ENCODE measurements at regions of chr14 and their contacts with region 1.

Region 1: GRCh38 chr14:54579621-54580020 is 12.7 kb downstream of the SAMD4A start:
- DNase-seq: peak; percentile 73
- ATAC-seq: peak; percentile 42
- H3K4me3 ChIP-seq: no peak overlapping the region
- H3K27ac ChIP-seq: no peak overlapping the region
- H3K4me1 ChIP-seq: peaks cover 34% of the 10 kb centered on the region
- H3K27me3 ChIP-seq: no peaks in the 10 kb centered on the region
- CTCF ChIP-seq: no peak
- POLR2A ChIP-seq: peak; percentile 31; the same call in 1 of the 2 replicates
- RAD21 ChIP-seq: no peak

Region 2: GRCh38 chr14:54591461-54591860 is 11.8 kb after region 1 on chr14:
- CTCF ChIA-PET with region 1: interaction called, 4 read pairs
- POLR2A ChIA-PET with region 1: interaction called, 4 read pairs
- dilution Hi-C with region 1: no loop called
- in situ Hi-C with region 1: no loop called
- intact Hi-C with region 1: loop called (anchors 2 kb)
- DNase-seq: no peak
- ATAC-seq: no peak
- H3K4me3 ChIP-seq: no peak overlapping the region
- H3K27ac ChIP-seq: no peak overlapping the region
- H3K4me1 ChIP-seq: peaks cover 11% of the 10 kb centered on the region
- H3K27me3 ChIP-seq: no peaks in the 10 kb centered on the region
- CTCF ChIP-seq: no peak
- POLR2A ChIP-seq: no peak
- RAD21 ChIP-seq: no peak

Region 3: GRCh38 chr14:54597795-54598443 is 18.3 kb after region 1 on chr14:
- CTCF ChIA-PET with region 1: no interaction called
- POLR2A ChIA-PET with region 1: no interaction called
- dilution Hi-C with region 1: no loop called
- in situ Hi-C with region 1: no loop called
- intact Hi-C with region 1: loop called (anchors 2 kb)
- DNase-seq: peak; percentile 70
- ATAC-seq: peak; percentile 43
- H3K4me3 ChIP-seq: no peak overlapping the region
- H3K27ac ChIP-seq: peak overlapping the region; percentile 76; the same call in 1 of the 2 replicates
- H3K4me1 ChIP-seq: peaks cover 14% of the 10 kb centered on the region
- H3K27me3 ChIP-seq: no peaks in the 10 kb centered on the region
- CTCF ChIP-seq: no peak
- POLR2A ChIP-seq: no peak
- RAD21 ChIP-seq: no peak

Region 4: GRCh38 chr14:54691525-54692283 is 112.1 kb after region 1 on chr14:
- CTCF ChIA-PET with region 1: interaction called, 3 read pairs
- POLR2A ChIA-PET with region 1: interaction called, 21 read pairs
- dilution Hi-C with region 1: no loop called
- in situ Hi-C with region 1: no loop called
- intact Hi-C with region 1: no loop called
- DNase-seq: peak; percentile 69
- ATAC-seq: peak; percentile 81
- H3K4me3 ChIP-seq: no peak overlapping the region
- H3K27ac ChIP-seq: no peak overlapping the region
- H3K4me1 ChIP-seq: peaks cover 18% of the 10 kb centered on the region
- H3K27me3 ChIP-seq: no peaks in the 10 kb centered on the region
- CTCF ChIP-seq: peak; percentile 88
- POLR2A ChIP-seq: peak; percentile 39; the same call in 1 of the 2 replicates
- RAD21 ChIP-seq: peak; percentile 92

Measured in IMR-90 (cell line).